ENCODE measurements at regions of chr1 and their contacts with region 1.

Region 1: DNA sequence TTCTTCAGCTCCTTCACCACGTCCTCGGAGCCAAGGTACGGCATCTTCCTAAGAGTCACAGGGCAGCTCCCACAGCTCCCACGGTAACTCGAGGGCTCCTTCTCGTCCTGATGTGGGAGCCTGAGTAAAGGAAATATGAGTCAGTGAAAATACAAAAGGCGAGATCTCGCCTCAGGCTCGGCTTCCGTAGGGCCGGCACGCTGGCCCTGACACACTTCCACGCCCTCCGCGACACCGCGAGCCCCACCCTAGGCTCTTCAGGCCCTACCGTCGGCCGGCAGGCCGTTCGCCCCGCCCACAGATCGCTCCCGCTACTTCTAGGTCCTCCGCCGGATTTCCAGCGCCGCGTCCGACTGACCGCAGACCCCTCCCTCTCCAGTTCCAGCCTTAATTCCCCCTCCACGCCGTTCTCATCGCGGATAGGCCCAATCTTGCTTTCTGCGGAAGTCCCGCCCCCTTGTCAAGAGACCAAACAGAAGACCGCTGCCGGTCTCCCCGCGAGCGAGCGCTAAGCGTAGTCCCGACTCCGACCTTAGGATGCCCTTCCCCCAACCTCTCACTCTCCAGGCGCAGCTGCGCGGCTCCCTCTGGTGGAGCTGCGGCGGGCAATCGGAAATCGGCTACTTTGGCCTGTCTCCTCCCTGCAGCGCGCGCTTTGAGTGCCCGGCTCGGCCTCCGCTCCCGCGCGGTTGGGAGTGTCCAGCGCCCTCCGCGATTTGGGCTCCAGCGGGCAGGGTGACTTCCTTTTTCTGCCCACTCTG is at the starts of genes AP4B1 and DCLRE1B:
- DNase-seq: peak; percentile 99
- total RNA-seq, gene AP4B1: 12.6 TPM
- total RNA-seq, gene DCLRE1B: 2.1 TPM

Region 2: GRCh38 chr1:113759333-113760101 is 145.3 kb before region 1 on chr1 and contains the start of gene PHTF1:
- intact Hi-C with region 1: loop called (anchors 1 kb)
- DNase-seq: peak; percentile 93
- total RNA-seq, gene PHTF1: 15.0 TPM

Region 3: GRCh38 chr1:113811888-113812660 is 92.8 kb before region 1 on chr1 and contains the start of gene RSBN1:
- intact Hi-C with region 1: loop called (anchors 1 kb)
- DNase-seq: peak; percentile 100
- total RNA-seq, gene RSBN1: 11.0 TPM

Region 4: GRCh38 chr1:113835642-113836307 is 69.1 kb before region 1 on chr1:
- intact Hi-C with region 1: loop called (anchors 5 kb)
- DNase-seq: no peak

Region 5: DNA sequence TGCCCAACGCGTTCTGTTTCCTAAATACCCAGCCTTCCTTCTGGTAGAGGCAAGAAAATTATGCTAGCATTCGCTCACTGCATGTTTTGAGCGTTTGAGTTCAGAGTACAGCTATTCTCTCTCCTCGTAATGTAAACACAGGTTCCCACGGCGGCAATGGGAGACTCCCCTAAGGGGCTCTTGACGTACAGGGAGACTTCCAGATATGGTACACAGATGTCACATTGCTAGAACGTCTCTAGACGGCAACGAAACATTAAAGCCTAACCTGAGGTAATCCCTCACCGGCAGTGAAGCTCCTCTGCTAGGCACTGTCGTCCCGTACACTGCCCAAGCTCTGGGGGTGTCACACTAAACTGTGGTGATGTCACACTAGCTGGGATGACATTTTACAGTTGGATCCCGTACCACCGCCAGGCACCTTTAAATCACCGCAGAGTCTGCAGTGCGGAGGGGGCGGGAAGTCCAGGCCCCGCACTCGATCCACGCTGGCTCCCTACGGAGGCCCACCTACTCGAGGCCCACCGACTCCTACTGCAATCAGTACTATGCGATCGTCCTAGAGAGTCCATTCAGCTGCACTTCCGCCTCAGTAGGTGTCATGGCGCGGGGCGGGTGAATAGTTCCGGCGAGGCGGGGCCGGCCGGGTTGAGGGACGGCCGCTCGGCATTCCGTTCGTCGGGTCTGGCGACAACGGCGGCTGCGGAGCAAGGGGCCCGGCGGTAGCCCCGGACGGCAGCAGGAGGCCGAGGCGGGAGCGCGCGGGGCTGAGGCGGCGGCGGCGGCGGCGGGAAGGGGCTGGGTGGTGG is 24.3 kb after region 1 on chr1 and contains the start of gene HIPK1:
- intact Hi-C with region 1: loop called (anchors 1 kb)
- DNase-seq: peak; percentile 97
- total RNA-seq, gene HIPK1: 63.5 TPM

Region 6: GRCh38 chr1:113949007-113949406 is 44.2 kb after region 1 on chr1:
- intact Hi-C with region 1: loop called (anchors 5 kb)
- DNase-seq: no peak

Region 7: GRCh38 chr1:114062477-114063099 is 157.7 kb after region 1 on chr1:
- intact Hi-C with region 1: no loop called
- DNase-seq: no peak

Measured in cardiac septum (tissue), 1 donor.